ENCODE measurements at regions of chr17 and their contacts with region 1.

Region 1: GRCh38 chr17:9837551-9838471 is 12.1 kb downstream of the GLP2R start:
- DNase-seq: no peak
- H3K4me3 ChIP-seq: peak overlapping the region in 1 of 3 donors; percentile 28
- H3K27ac ChIP-seq: peak overlapping the region in 1 of 2 donors; percentile 76
- H3K4me1 ChIP-seq: no peaks in the 10 kb centered on the region
- H3K27me3 ChIP-seq: no peaks in the 10 kb centered on the region
- CTCF ChIP-seq: no peak
- POLR2A ChIP-seq: no peak

Region 2: GRCh38 chr17:9071921-9072498 is 765.8 kb before region 1 on chr17:
- intact Hi-C with region 1: no loop called
- DNase-seq: no peak
- H3K4me3 ChIP-seq: peak overlapping the region in 1 of 3 donors; percentile 40
- H3K27ac ChIP-seq: peak overlapping the region; percentile 62 to 66
- H3K4me1 ChIP-seq: peaks cover 0 to 3% of the 10 kb centered on the region in 2 donors
- H3K27me3 ChIP-seq: no peaks in the 10 kb centered on the region
- CTCF ChIP-seq: no peak
- POLR2A ChIP-seq: no peak

Region 3: GRCh38 chr17:9743096-9743495 is 94.7 kb before region 1 on chr17:
- intact Hi-C with region 1: no loop called
- DNase-seq: no peak
- H3K4me3 ChIP-seq: no peak overlapping the region
- H3K27ac ChIP-seq: no peak overlapping the region
- H3K4me1 ChIP-seq: no peaks in the 10 kb centered on the region
- H3K27me3 ChIP-seq: no peaks in the 10 kb centered on the region
- CTCF ChIP-seq: no peak
- POLR2A ChIP-seq: no peak

Region 4: GRCh38 chr17:9865586-9865985 is 27.8 kb after region 1 on chr17:
- intact Hi-C with region 1: loop called (anchors 2 kb)
- DNase-seq: no peak
- H3K4me3 ChIP-seq: no peak overlapping the region
- H3K27ac ChIP-seq: no peak overlapping the region
- H3K4me1 ChIP-seq: no peaks in the 10 kb centered on the region
- H3K27me3 ChIP-seq: no peaks in the 10 kb centered on the region
- CTCF ChIP-seq: no peak
- POLR2A ChIP-seq: no peak

Measured in breast epithelium (tissue), 4 donors.